ENCODE measurements at regions of chr2 and their contacts with region 1.

Region 1: DNA sequence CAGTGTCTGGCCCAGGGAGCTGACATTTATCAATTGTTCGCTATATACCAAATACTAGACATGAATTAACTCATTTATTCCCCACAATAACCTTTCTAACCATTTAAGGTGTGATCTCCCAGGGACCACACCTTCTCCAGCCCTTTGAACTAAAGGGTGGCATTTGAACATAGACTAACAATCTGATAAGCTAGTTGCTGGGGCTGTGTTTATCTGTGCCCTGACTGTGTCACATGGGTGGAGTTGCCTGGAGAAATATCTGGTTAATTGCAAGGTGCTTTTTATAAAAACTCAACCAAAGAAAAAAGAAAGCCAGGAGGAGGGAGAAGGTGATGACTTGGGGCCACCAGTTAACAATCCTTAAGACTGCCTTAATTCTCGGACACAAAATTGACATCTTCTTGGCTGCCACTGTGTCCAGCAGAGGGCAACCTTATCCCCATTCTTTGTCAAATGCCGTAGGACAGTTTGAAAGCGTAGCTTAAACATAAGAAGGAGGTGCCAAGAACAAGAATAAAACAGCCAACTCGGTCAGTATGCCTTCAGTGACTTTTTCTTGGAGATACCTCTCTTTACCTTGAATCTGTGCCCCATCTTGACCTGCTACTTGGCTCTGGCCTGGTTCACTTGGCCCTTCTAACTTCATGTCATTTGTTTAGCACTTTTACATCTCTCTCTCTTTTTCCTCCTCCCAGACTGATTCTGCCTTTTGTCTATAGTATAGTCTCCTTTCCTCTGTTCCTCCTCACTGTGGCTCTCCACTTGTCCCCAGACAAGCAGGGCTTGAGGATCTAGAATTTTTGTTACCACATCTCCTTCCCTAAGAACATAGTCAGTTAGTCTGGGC is 183.4 kb downstream of the MYO3B start:
- DNase-seq: peak; percentile 66
- H3K4me3 ChIP-seq: no peak overlapping the region
- H3K27ac ChIP-seq: no peak overlapping the region
- H3K4me1 ChIP-seq: no peaks in the 10 kb centered on the region
- CTCF ChIP-seq: peak; percentile 85

Region 2: GRCh38 chr2:170235860-170236679 is 125.2 kb before region 1 on chr2:
- CTCF ChIA-PET with region 1: no interaction called
- POLR2A ChIA-PET with region 1: no interaction called
- intact Hi-C with region 1: loop called (anchors 10 kb)
- DNase-seq: peak; percentile 46
- H3K4me3 ChIP-seq: no peak overlapping the region
- H3K27ac ChIP-seq: no peak overlapping the region
- H3K4me1 ChIP-seq: no peaks in the 10 kb centered on the region
- CTCF ChIP-seq: peak; percentile 80

Region 3: DNA sequence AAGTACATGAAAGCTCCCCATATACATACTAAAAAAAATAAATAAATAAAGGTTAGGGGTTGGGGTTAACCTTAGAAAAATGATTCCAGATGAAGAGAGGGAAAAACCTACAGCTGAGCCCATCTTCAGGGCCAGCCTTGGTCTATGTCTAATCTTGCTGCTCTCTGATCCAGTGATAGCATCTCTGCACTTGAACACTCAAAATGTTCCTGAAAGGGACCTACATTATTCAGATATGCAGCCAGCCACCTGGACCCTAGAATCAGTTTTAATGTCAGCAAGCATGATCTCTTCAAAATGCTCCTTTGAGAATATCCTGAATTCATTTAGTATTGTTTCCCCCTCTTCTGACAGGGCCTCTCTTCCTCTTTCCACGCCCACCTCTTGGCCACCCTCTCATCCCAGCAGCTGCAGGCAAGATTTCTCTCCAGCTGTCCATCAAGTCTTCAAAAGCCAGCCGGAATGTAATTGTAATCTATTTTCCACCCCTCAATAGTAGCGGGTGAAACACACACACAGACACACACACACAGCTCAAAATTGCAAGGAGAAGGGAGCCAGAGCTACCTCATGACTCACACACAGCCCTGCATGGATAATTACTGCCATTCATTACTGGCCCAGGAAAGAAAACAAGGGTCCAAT is 47.8 kb before region 1 on chr2:
- CTCF ChIA-PET with region 1: no interaction called
- POLR2A ChIA-PET with region 1: no interaction called
- intact Hi-C with region 1: no loop called
- DNase-seq: no peak
- H3K4me3 ChIP-seq: no peak overlapping the region
- H3K27ac ChIP-seq: no peak overlapping the region
- H3K4me1 ChIP-seq: no peaks in the 10 kb centered on the region
- CTCF ChIP-seq: no peak

Measured in OCI-LY7 (cell line).